ENCODE measurements at regions of chr19 and their contacts with region 1.

Region 1: DNA sequence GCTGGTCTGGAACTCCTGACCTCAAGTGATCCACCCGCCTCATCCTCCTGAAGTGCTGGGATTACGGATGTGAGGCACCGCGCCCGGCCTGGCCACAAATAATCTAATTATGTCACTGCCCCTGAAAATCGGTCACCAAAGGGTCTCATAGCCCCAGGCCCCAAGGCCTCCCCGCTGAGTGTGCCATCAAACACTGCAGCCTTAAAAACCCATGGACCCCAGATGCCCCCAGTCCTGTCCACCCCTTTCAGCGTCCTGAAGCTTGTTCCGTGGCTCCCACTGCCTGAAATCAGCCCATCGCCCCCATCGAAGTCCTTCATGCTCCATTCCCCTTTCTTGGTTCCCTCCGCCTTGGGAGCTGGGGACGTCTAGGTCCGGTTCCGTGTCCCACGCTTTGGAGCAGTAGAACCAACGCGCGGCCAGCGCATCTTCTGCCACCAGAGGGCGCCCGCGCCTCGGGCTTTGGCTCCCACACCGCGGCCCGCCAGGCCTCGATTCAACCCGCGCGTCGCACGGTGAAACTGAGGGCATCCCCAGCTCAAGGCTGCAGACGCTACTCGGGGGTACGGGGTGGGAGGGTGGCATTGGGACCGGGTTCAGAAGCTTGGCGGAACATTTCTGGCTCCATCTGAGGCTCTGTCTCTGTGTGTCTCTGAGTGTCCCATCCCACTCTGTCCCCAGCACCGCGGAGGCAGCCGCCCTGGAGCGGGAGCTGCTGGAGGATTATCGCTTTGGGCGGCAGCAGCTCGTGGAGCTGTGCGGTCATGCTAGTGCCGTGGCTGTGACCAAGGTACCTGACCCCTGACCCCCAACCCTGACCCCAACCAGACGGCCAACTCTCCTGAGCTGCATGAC is 3.5 kb downstream of the YJEFN3 start:
- DNase-seq: peak; percentile 62 to 84
- H3K4me3 ChIP-seq: no peak overlapping the region
- H3K27ac ChIP-seq: no peak overlapping the region
- H3K4me1 ChIP-seq: no peaks in the 10 kb centered on the region
- H3K27me3 ChIP-seq: no peaks in the 10 kb centered on the region
- CTCF ChIP-seq: peak; percentile 79 to 95 (median 89)
- POLR2A ChIP-seq: no peak

Region 2: DNA sequence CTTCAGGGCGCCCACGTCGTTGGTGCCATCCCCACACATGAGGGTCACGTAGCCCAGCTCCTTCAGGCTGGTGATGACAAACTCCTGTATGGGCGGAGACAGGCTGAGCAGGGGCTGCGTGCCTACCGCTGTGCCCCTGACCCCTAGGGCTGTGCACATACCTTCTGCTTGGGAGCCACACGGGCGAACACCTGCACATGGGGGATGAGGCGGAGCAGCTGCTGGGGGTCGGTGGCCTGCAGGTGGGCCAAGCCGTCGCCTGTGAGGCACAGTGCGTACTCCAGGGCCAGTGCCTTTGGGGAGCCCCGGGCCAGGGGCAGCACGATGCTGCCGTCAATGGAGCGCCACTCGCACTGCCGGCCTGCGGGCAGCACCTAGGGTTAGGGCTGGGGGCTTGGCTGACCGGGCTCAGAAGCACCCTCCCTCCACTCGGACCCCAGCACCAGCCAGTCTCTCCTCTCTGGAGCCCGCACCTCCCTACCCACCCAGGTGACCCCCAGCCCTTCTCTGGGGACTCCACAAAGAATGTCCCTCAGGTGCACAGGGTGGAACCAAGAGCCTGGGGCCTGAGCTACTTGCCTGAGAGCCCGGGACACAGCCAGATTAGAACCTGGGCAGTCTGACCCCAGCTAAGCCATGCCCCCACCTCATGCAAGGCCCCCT is 117.5 kb after region 1 on chr19:
- intact Hi-C with region 1: loop called (anchors 5 kb)
- DNase-seq: no peak
- H3K4me3 ChIP-seq: no peak overlapping the region
- H3K27ac ChIP-seq: no peak overlapping the region
- H3K4me1 ChIP-seq: no peaks in the 10 kb centered on the region
- H3K27me3 ChIP-seq: no peaks in the 10 kb centered on the region
- CTCF ChIP-seq: no peak
- POLR2A ChIP-seq: no peak

Region 3: GRCh38 chr19:19956434-19957075 is 424.4 kb after region 1 on chr19:
- intact Hi-C with region 1: loop called (anchors 10 kb)
- DNase-seq: no peak
- H3K4me3 ChIP-seq: no peak overlapping the region
- H3K27ac ChIP-seq: no peak overlapping the region
- H3K4me1 ChIP-seq: no peaks in the 10 kb centered on the region
- H3K27me3 ChIP-seq: no peaks in the 10 kb centered on the region
- CTCF ChIP-seq: no peak
- POLR2A ChIP-seq: no peak

Measured in breast epithelium (tissue), 4 donors.